AG04449 (cell line): ENCODE measurements at regions of chr12 and their contacts with region 1.

Region 1: GRCh38 chr12:101830367-101831325 is at the start of gene GNPTAB:
- DNase-seq: peak; percentile 54
- H3K4me3 ChIP-seq: peak within 1 kb of the TSS; percentile 97
- CTCF ChIP-seq: peak; percentile 83

Region 2: GRCh38 chr12:101773650-101774162 is 56.9 kb before region 1 on chr12:
- CTCF ChIA-PET with region 1: interaction called, 87 read pairs
- POLR2A ChIA-PET with region 1: interaction called, 6 read pairs
- DNase-seq: peak; percentile 16
- H3K4me3 ChIP-seq: no peak overlapping the region
- CTCF ChIP-seq: peak; percentile 79

Region 3: DNA sequence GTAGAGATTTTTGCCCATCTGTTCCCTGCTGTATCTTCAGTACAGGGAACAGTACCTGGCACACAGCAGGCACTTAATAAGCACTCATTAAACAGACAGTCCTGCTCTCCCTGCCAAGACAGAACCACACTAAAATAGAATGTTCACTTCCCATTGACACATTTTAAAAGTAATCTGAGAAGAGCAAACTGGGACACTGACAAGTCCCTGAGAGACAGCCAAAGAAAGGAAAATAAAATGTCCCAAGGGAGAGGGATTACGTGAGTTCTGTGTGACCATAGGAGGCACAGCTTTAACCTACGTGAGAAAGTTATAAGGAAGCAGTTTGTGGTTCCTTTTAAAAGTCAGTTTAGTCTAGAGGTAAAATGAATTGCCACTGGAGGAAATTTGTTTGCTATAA is 47.5 kb before region 1 on chr12:
- CTCF ChIA-PET with region 1: interaction called, 59 read pairs
- POLR2A ChIA-PET with region 1: no interaction called
- DNase-seq: no peak
- H3K4me3 ChIP-seq: no peak overlapping the region
- CTCF ChIP-seq: no peak

Region 4: DNA sequence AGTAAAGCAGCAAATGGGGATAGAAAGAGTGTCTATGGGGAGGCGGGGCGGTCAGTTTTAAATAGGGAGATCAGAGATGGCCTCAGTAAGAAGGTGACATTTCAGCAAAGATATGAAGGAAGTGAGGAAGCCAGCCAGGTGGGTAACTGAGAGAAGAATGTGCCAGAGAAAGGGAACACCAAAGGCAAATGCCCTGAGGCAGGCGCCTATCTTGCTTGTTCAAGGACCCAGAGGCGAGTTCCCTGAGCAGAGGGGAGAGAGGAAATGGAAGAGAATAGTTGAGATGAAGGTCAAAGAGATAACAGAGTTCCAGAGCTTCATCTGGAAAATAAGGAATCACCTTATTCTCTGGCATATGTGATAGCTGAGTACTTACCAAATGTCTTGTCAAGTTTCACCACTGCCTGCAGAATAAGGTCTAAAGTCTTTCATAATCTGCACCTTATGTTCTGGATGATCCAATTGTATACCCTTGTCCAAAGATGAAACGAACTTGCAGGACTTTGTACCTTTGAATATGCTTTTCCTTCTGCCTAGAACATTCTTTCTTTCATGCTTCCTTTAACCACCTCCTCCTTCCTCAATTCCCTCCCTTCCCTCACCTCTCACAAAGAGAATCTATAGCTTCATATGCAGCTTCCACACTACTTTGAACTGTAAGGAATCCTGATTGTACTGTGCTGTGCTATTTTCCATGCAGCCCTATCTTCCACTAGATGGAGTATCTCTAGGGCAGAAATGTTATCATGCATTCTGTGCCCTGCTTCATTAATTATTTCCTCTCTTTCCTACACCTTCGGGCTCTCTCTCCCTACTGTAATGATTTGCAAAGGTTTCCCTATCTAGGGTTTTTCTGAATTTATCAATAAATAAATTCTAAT is 38.4 kb before region 1 on chr12:
- CTCF ChIA-PET with region 1: interaction called, 18 read pairs
- POLR2A ChIA-PET with region 1: interaction called, 3 read pairs
- DNase-seq: no peak
- H3K4me3 ChIP-seq: no peak overlapping the region
- CTCF ChIP-seq: no peak

Region 5: GRCh38 chr12:101819467-101819866 is 11.2 kb before region 1 on chr12:
- CTCF ChIA-PET with region 1: interaction called, 72 read pairs
- POLR2A ChIA-PET with region 1: interaction called, 3 read pairs
- DNase-seq: no peak
- H3K4me3 ChIP-seq: no peak overlapping the region
- CTCF ChIP-seq: no peak

Region 6: GRCh38 chr12:101857043-101857558 is 26.5 kb after region 1 on chr12:
- CTCF ChIA-PET with region 1: interaction called, 11 read pairs
- POLR2A ChIA-PET with region 1: no interaction called
- DNase-seq: peak; percentile 77
- H3K4me3 ChIP-seq: no peak overlapping the region
- CTCF ChIP-seq: no peak

Region 7: GRCh38 chr12:102302553-102302952 is 471.9 kb after region 1 on chr12:
- CTCF ChIA-PET with region 1: no interaction called
- POLR2A ChIA-PET with region 1: no interaction called
- DNase-seq: no peak
- H3K4me3 ChIP-seq: no peak overlapping the region
- CTCF ChIP-seq: no peak